H1 (cell line): ENCODE measurements at regions of chr11 and their contacts with region 1.

Region 1: DNA sequence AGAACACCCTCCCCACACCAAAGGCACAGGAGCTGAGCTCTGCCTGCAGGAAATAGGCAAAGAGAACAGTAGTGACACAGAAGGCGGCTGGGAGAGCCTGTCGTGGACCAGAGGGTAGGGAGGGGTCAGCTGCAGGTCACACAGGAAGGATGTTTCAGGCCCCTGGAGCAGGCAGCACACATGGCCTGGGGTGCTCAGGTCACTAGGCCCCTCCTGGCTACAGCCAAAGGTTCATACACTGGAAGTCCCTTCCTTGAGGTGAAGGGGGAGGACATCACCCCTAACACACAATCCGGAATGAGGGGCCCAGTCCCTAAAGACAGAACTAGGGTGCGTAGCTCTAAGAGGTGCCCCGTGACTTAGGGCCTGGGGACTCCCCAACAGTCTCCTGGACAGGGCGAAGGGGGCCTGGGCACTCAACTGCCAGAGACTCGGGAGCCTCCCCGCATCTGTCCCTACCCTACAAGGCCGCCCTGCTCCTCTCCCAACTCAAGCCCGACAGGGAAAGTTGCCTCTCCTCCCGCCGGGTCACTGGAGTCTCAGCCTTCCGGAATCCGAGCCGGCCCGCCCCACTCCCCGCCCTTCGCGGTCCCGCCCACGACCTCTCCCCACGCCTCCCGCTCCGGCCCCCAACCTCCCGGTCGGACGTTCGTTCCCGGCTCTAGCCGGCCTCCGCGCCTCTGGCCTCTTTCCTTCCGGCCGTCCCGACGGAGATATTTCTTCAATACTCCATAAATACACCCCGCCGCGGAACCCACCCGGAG is at the start of gene CYB5R2:
- DNase-seq: peak in 1 of 2 experiments; percentile 79
- H3K4me3 ChIP-seq: peak within 1 kb of the TSS; percentile 59 to 94 (median 66)
- H3K27ac ChIP-seq: peak within 1 kb of the TSS; percentile 73; the same call in 1 of the 2 replicates
- H3K4me1 ChIP-seq: peaks cover 0 to 10% (median 4%) of the 10 kb centered on the region in 4 experiments; a peak in 4 of 7 replicates
- H3K27me3 ChIP-seq: no peaks in the 10 kb centered on the region
- CTCF ChIP-seq: no peak
- EP300 ChIP-seq: no peak
- POLR2A ChIP-seq: peak in 1 of 2 experiments; percentile 65; a peak in 2 of 3 replicates
- RAD21 ChIP-seq: no peak
- total RNA-seq, gene CYB5R2: 50.4 and 53.0 TPM in 2 replicates

Region 2: DNA sequence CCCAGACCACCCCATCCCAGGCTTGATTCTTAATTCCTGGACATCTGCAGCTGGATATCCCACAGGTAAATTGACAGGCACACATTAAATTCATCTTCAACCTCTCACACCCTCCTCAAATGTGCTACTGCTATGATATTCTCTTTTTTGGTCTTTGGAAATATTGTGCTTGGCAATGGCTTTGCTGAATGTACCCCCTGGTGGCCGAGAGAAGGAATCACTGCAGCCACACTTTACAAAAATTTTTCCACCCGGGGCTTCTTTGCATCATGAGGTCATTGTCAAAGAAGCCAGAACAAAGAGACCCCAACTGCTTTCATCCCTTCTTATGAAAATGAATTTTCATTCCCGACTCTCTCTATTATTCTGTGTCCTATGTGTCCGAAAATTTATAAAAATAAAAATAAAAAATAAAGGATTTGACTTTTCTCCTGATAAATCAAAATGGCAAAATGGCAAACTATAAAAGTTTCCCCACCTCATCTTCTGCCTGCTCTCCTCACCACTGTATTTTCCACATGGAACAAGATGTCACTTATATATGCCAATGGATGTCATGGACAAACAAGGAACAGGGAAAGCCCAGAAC is 15.2 kb after region 1 on chr11:
- CTCF ChIA-PET with region 1: interaction called, 35 read pairs
- POLR2A ChIA-PET with region 1: interaction called, 14 read pairs
- DNase-seq: no peak
- H3K4me3 ChIP-seq: no peak overlapping the region
- H3K27ac ChIP-seq: no peak overlapping the region
- H3K4me1 ChIP-seq: peaks cover 0 to 4% (median under 1%) of the 10 kb centered on the region in 4 experiments; a peak in 2 of 7 replicates
- H3K27me3 ChIP-seq: no peaks in the 10 kb centered on the region
- CTCF ChIP-seq: peak; percentile 26 to 63 (median 60)
- EP300 ChIP-seq: no peak
- POLR2A ChIP-seq: no peak
- RAD21 ChIP-seq: peak; percentile 61 to 67

Region 3: GRCh38 chr11:7696424-7696823 is 23.3 kb after region 1 on chr11:
- CTCF ChIA-PET with region 1: interaction called, 11 read pairs
- POLR2A ChIA-PET with region 1: interaction called, 5 read pairs
- DNase-seq: no peak
- H3K4me3 ChIP-seq: no peak overlapping the region
- H3K27ac ChIP-seq: no peak overlapping the region
- H3K4me1 ChIP-seq: 0 out of 7 replicates have a peak, but pooled peaks cover 0 to 2% (median 0%) of the 10 kb centered on the region in 4 experiments
- H3K27me3 ChIP-seq: no peaks in the 10 kb centered on the region
- CTCF ChIP-seq: no peak
- EP300 ChIP-seq: no peak
- POLR2A ChIP-seq: no peak
- RAD21 ChIP-seq: no peak